PC-9 (cell line): ENCODE measurements at regions of chr4 and their contacts with region 1.

Region 1: DNA sequence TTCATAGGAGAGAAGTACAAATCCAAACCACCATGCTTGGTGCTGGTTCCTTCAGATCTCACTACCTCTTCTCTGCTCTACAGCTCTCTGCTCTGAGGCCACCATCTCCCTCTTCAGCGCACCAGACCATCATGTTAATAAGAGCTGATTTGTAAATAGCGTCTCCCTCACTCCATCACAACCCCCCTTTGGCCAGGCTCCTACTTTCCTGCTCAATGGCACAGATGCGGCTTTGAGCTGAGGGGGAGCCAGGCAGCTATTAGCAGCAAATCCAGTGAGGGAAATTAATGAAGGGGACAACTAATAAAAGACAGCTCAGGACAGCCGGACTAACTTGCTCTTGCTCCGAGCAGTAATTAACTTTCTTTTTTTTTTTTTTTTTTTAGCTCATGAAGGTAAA is 13.1 kb downstream of the NEUROG2 start:
- DNase-seq: no peak
- H3K4me3 ChIP-seq: no peak overlapping the region
- H3K27ac ChIP-seq: no peak overlapping the region
- H3K4me1 ChIP-seq: no peaks in the 10 kb centered on the region
- H3K27me3 ChIP-seq: no peaks in the 10 kb centered on the region
- CTCF ChIP-seq: no peak

Region 2: DNA sequence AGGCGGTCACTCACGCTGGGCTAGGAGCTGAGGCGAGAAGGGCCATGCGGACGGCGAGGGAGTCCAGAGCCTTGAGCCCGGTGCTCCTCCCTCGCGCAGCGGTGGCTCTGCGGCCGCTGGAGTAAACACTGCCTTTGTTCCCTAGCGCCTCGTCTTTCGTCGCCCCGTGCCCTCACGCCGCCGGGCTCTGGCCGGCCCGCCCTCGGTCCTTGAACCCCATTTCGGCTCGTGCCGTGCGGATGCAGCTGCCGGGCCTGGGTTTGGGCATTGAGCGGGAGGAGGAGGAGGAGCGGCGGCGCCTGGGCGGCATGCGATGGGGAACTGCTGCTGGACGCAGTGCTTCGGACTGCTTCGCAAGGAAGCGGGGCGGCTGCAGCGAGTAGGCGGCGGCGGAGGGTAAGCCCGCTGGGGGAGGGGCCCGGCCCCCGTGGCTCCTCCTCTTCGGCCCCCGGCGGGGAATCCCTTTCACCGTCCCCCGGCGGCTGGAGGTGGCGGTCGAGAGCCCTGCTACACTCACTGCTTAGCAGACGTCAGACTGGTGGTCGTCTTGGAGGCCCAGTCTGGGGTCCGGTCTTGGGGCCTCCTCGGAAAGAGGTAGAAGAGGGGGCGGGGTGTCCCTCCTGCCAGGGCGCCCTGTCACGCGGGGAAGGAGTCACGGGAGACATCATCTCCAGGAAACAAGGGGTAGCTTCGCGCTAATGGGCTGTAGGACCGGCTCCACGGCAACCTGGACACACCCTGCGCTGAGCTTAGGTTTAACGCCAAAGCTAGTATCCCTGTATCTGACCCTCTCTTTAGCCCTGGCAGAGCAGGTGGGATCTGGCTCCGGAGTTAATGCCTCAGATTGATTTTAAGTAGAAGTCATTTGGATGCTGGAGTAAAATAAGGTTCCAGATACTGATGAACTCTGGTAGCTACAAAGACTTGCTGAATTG is 270.8 kb before region 1 on chr4 and contains the start of gene AP1AR:
- CTCF ChIA-PET with region 1: no interaction called
- POLR2A ChIA-PET with region 1: no interaction called
- intact Hi-C with region 1: no loop called
- DNase-seq: peak; percentile 73 to 85
- H3K4me3 ChIP-seq: peak within 1 kb of the TSS; percentile 70
- H3K27ac ChIP-seq: peak within 1 kb of the TSS; percentile 94
- H3K4me1 ChIP-seq: peaks cover 44% of the 10 kb centered on the region
- H3K27me3 ChIP-seq: no peaks in the 10 kb centered on the region
- CTCF ChIP-seq: no peak; the same call in 1 of the 2 replicates
- total RNA-seq, gene AP1AR: 27.6 and 35.8 TPM in 2 replicates

Region 3: GRCh38 chr4:113086172-113086695 is 583.4 kb after region 1 on chr4:
- CTCF ChIA-PET with region 1: interaction called, 10 read pairs
- POLR2A ChIA-PET with region 1: no interaction called
- intact Hi-C with region 1: no loop called
- DNase-seq: no peak
- H3K4me3 ChIP-seq: no peak overlapping the region
- H3K27ac ChIP-seq: no peak overlapping the region
- H3K4me1 ChIP-seq: no peaks in the 10 kb centered on the region
- H3K27me3 ChIP-seq: no peaks in the 10 kb centered on the region
- CTCF ChIP-seq: no peak

Region 4: GRCh38 chr4:113574636-113575103 is 1071.8 kb after region 1 on chr4:
- CTCF ChIA-PET with region 1: no interaction called
- POLR2A ChIA-PET with region 1: no interaction called
- intact Hi-C with region 1: no loop called
- DNase-seq: no peak
- H3K4me3 ChIP-seq: no peak overlapping the region
- H3K27ac ChIP-seq: no peak overlapping the region
- H3K4me1 ChIP-seq: no peaks in the 10 kb centered on the region
- H3K27me3 ChIP-seq: no peaks in the 10 kb centered on the region
- CTCF ChIP-seq: no peak